ENCODE measurements at regions of chr20 and their contacts with region 1.

Region 1: DNA sequence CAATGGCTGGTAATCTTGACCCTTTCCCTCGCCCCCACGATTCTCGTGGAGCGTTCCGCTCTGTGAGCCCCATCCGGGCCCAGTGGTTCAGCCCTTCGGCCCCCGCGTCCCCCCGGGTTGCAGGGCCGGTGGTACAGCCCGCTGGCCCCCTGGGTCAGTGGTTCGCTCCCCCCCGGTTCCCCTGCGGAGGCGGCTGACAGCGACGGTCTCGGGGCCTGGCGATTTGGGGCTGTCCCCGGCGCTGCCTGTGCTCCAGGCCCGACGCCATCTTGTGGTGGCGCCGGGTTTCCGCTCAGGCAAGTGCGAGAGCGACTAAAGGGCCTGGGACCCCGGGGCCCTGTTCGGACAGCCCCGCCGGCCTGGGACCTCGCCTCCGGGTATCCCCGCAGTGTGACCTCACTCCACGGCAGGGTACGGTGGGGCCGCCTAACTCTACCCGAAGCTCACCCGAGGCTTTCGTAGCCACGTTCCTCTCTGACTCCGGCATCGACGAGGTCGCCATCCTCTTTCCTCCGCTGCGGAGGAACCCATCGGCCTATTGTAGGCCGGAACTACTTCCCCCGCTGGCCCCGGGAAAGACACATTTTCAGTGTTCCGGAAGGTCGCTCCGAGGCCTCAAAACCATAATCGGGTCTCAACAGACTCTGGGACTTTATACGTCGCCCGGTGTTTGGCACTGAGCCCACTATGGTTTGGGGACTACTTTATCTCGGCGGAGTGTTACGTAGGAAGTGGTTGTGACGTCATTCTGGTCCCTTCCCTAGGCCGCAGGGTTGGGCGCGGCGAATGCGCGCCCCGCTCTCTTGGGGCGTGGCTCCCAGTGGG is at the start of gene ZNF335:
- DNase-seq: peak; percentile 99
- ATAC-seq: peak; percentile 80
- H3K4me3 ChIP-seq: peak within 1 kb of the TSS; percentile 89 to 99 (median 95)
- H3K4me3 Mint-ChIP-seq: peak within 1 kb of the TSS; percentile 93
- H3K27ac ChIP-seq: peak within 1 kb of the TSS; percentile 99 to 100
- H3K27ac Mint-ChIP-seq: peak within 1 kb of the TSS; percentile 100
- H3K4me1 ChIP-seq: peaks cover 23 to 27% of the 10 kb centered on the region in 2 donors
- H3K4me1 Mint-ChIP-seq: peaks cover 24% of the 10 kb centered on the region
- H3K27me3 ChIP-seq: no peaks in the 10 kb centered on the region
- H3K27me3 Mint-ChIP-seq: no peaks in the 10 kb centered on the region
- CTCF ChIP-seq: no peak
- total RNA-seq, gene ZNF335: 62.7 and 64.8 TPM in 2 replicates

Region 2: GRCh38 chr20:45798935-45799642 is 172.8 kb before region 1 on chr20:
- CTCF ChIA-PET with region 1: interaction called, 15 read pairs
- POLR2A ChIA-PET with region 1: no interaction called
- intact Hi-C with region 1: loop called (anchors 5 kb)
- DNase-seq: peak; percentile 72
- ATAC-seq: peak; percentile 83
- H3K4me3 ChIP-seq: no peak overlapping the region
- H3K4me3 Mint-ChIP-seq: no peak overlapping the region
- H3K27ac ChIP-seq: peak overlapping the region; percentile 8 to 16
- H3K27ac Mint-ChIP-seq: peak overlapping the region; percentile 0
- H3K4me1 ChIP-seq: peaks cover 3 to 10% of the 10 kb centered on the region in 2 donors
- H3K4me1 Mint-ChIP-seq: peaks cover 8% of the 10 kb centered on the region
- H3K27me3 ChIP-seq: no peaks in the 10 kb centered on the region
- H3K27me3 Mint-ChIP-seq: no peaks in the 10 kb centered on the region
- CTCF ChIP-seq: peak; percentile 83

Region 3: DNA sequence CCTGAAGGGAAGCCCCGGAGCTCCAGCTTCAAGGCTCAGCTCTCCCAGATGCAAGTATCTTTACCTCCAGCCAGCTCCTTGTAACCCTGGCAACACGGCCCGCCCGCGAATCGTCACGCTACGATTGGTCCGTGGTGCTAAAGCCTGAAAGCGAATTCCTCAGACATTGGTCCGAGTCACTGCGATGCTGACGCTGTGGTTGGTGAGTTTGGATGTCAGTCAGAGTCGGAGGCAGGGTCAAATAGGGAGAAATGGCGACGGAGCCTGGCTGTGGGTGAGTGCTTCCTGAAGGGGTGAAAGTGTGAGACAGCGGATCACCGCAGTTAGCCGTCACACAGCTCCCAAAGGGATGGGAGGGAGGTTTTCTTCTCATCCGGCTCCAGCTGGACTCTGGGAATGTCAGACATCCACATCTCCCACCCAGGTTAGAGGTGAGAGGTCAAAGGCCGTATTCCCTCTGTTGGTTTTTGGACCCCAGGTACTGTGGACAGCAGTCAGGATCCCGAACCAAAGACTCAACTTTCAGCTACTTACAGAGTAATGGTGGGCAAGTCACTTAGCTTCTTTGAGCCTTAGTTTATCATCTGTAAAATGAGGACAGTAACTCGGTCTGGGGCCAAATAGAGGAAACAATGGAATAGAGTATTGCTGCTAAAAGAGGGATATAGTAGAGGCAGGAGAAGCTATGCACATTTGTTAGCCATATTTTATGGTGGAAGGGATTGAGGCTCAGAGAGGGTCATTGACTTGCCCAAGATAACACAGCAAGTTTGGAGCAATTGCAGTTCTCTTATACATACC is 90.7 kb before region 1 on chr20 and contains the start of gene ZSWIM1:
- CTCF ChIA-PET with region 1: interaction called, 10 read pairs
- POLR2A ChIA-PET with region 1: no interaction called
- intact Hi-C with region 1: no loop called
- DNase-seq: peak; percentile 99
- ATAC-seq: peak; percentile 99
- H3K4me3 ChIP-seq: peak within 1 kb of the TSS; percentile 76 to 96 (median 86)
- H3K4me3 Mint-ChIP-seq: peak within 1 kb of the TSS; percentile 91
- H3K27ac ChIP-seq: peak within 1 kb of the TSS; percentile 82 to 89
- H3K27ac Mint-ChIP-seq: peak within 1 kb of the TSS; percentile 90
- H3K4me1 ChIP-seq: peaks cover 3 to 19% of the 10 kb centered on the region in 2 donors
- H3K4me1 Mint-ChIP-seq: peaks cover 33% of the 10 kb centered on the region
- H3K27me3 ChIP-seq: no peaks in the 10 kb centered on the region
- H3K27me3 Mint-ChIP-seq: no peaks in the 10 kb centered on the region
- CTCF ChIP-seq: no peak
- total RNA-seq, gene ZSWIM1: 15.7 and 18.5 TPM in 2 replicates

Region 4: GRCh38 chr20:45934586-45935415 is 37.1 kb before region 1 on chr20 and contains the start of gene PCIF1:
- CTCF ChIA-PET with region 1: interaction called, 44 read pairs
- POLR2A ChIA-PET with region 1: interaction called, 62 read pairs
- intact Hi-C with region 1: loop called (anchors 1 kb)
- DNase-seq: peak; percentile 100
- ATAC-seq: peak; percentile 82
- H3K4me3 ChIP-seq: peak within 1 kb of the TSS; percentile 88 to 100 (median 93)
- H3K4me3 Mint-ChIP-seq: peak within 1 kb of the TSS; percentile 96
- H3K27ac ChIP-seq: peak within 1 kb of the TSS; percentile 99
- H3K27ac Mint-ChIP-seq: peak within 1 kb of the TSS; percentile 98
- H3K4me1 ChIP-seq: peaks cover 12 to 19% of the 10 kb centered on the region in 2 donors
- H3K4me1 Mint-ChIP-seq: peaks cover 28% of the 10 kb centered on the region
- H3K27me3 ChIP-seq: no peaks in the 10 kb centered on the region
- H3K27me3 Mint-ChIP-seq: no peaks in the 10 kb centered on the region
- CTCF ChIP-seq: no peak
- total RNA-seq, gene PCIF1: 78.9 and 79.2 TPM in 2 replicates

Region 5: GRCh38 chr20:46013826-46014516 is 42.1 kb after region 1 on chr20:
- CTCF ChIA-PET with region 1: interaction called, 33 read pairs
- POLR2A ChIA-PET with region 1: interaction called, 5 read pairs
- intact Hi-C with region 1: loop called (anchors 2 kb)
- DNase-seq: peak; percentile 87
- ATAC-seq: peak; percentile 88
- H3K4me3 ChIP-seq: peak overlapping the region in 4 of 5 experiments; percentile 19 to 47 (median 35)
- H3K4me3 Mint-ChIP-seq: peak overlapping the region; percentile 72
- H3K27ac ChIP-seq: no peak overlapping the region
- H3K27ac Mint-ChIP-seq: peak overlapping the region; percentile 63
- H3K4me1 ChIP-seq: peaks cover 48 to 49% of the 10 kb centered on the region in 2 donors
- H3K4me1 Mint-ChIP-seq: peaks cover 49% of the 10 kb centered on the region
- H3K27me3 ChIP-seq: peaks cover 0 to 57% (median 29%) of the 10 kb centered on the region in 4 experiments
- H3K27me3 Mint-ChIP-seq: peaks cover 59% of the 10 kb centered on the region
- CTCF ChIP-seq: peak; percentile 89

Region 6: DNA sequence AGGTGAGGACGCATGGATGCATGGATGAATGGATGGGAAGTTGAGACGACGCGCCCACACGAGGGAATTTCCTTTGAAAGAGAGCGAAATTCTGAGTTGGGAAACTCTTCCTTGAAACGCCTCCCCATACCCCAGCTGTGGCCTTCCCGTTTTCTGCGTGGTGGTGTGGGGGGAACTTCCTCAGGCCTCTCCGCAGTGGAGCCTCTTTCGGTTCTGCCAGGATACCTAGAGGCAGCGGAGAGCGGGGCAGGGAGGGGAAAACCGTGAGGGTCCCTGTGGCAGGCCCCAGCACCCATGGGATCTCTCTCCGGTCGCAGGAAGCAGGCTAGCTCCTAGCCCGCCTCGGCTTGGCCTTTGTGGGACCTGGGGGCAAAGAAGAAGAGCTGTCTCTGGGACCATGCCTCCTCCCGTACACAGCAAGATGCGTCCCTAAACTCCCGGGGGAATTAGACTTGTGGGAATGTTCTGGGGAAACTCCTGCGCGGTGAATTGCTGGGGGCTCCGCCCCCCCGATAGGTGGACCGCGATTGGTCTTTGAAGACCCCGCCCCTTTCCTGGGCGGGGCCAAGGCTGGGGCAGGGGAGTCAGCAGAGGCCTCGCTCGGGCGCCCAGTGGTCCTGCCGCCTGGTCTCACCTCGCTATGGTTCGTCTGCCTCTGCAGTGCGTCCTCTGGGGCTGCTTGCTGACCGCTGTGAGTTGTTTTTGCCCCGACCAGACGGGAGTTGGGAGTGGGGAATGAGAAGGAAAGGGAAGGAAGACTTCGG is 146.0 kb after region 1 on chr20 and contains the start of gene CD40:
- CTCF ChIA-PET with region 1: interaction called, 3 read pairs
- POLR2A ChIA-PET with region 1: interaction called, 4 read pairs
- intact Hi-C with region 1: loop called (anchors 2 kb)
- DNase-seq: peak; percentile 94
- ATAC-seq: peak; percentile 77
- H3K4me3 ChIP-seq: peak within 1 kb of the TSS; percentile 65 to 93 (median 83)
- H3K4me3 Mint-ChIP-seq: peak within 1 kb of the TSS; percentile 100
- H3K27ac ChIP-seq: peak within 1 kb of the TSS; percentile 99 to 100
- H3K27ac Mint-ChIP-seq: peak within 1 kb of the TSS; percentile 100
- H3K4me1 ChIP-seq: peaks cover 35 to 49% of the 10 kb centered on the region in 2 donors
- H3K4me1 Mint-ChIP-seq: peaks cover 54% of the 10 kb centered on the region
- H3K27me3 ChIP-seq: no peaks in the 10 kb centered on the region
- H3K27me3 Mint-ChIP-seq: no peaks in the 10 kb centered on the region
- CTCF ChIP-seq: no peak
- total RNA-seq, gene CD40: 206 and 210 TPM in 2 replicates